Tibial artery (tissue), 4 donors: ENCODE measurements at regions of chr5 and their contacts with region 1.

Region 1: GRCh38 chr5:91787718-91788117 is 404.6 kb upstream of the ARRDC3 start:
- DNase-seq: no peak
- H3K4me3 ChIP-seq: no peak overlapping the region
- H3K27ac ChIP-seq: no peak overlapping the region
- H3K4me1 ChIP-seq: no peaks in the 10 kb centered on the region
- H3K27me3 ChIP-seq: no peaks in the 10 kb centered on the region
- CTCF ChIP-seq: no peak

Region 2: GRCh38 chr5:91345461-91345860 is 442.3 kb before region 1 on chr5:
- intact Hi-C with region 1: loop called (anchors 10 kb)
- DNase-seq: no peak
- H3K4me3 ChIP-seq: no peak overlapping the region
- H3K27ac ChIP-seq: no peak overlapping the region
- H3K4me1 ChIP-seq: no peaks in the 10 kb centered on the region
- H3K27me3 ChIP-seq: no peaks in the 10 kb centered on the region
- CTCF ChIP-seq: no peak